A673 (cell line): ENCODE measurements at regions of chr10 and their contacts with region 1.

Region 1: DNA sequence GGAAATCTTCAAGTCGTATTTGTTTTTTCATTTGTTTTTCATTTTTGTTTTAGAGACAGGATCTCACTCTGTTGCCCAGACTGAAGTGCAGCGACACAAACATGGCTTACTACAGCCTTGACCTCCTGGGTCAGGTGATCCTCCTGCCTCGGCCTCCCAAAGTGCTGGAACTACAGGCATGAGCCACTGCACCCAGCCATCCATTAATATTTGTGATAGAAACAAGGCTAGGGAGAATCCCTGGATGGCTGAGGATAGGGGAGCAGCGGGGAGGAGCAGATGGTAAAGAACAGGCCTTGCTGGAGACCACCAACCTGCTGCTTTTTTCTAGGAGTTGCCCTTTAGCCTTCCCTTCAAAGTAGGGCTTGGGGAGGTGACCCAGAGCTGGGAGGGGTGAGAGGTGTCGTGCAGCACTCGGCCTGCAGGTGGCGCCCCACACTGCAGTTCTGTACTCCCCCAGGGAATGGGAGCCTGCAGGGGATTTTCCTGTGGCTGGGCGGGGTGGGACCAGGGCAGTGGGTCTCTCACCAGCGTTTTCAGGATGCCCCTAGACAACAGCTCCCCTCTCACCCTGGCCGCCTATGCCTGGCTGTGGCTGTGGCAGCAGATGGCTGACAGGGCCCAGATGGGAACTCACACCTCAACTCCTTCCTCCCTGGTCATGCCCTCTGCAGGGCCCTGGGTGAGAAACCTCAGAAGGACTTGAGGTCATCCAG is 12.6 kb upstream of the CDH23 start:
- DNase-seq: peak; percentile 75
- H3K4me3 ChIP-seq: no peak overlapping the region
- H3K27ac ChIP-seq: no peak overlapping the region
- H3K4me1 ChIP-seq: no peaks in the 10 kb centered on the region
- H3K27me3 ChIP-seq: no peaks in the 10 kb centered on the region
- CTCF ChIP-seq: peak; percentile 98

Region 2: DNA sequence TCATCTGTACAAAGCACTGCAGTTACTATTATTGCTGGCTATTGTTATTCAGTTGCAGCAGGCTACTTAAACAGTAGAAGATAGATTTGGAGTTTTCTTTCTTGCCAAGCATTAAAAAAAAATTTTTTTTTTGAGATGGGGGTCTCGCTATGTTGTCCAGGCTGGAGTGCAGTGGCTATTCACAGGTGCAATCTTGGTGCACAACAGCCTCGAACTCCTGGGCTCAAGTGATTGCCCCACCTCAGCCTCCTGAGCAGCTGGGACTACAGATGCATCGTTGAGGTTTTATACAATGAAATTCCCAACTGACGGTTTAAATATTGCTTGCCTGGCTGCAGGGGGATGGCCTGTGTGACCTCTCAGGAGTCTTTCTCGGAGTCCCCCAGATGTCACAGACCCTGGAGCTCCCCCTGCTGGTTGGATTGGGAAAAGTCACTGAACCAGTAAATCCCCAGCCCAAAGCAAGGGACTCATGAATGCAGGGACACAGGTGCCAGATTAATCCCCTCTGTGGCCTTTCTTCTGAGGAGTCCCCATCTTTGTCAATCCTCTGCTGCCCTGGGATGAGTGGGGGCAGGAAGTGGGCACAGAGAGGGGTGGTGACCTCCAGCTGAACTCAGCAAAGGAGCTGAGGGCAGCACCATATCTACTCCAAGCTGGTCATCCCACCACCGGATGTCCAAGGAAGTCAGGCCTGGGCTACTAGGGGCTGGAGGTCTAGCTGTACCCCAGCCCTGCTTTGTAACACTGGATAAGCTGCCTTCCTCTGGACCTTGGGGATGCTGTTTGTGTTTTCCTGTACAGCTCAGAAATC is 185.9 kb after region 1 on chr10:
- CTCF ChIA-PET with region 1: interaction called, 5 read pairs
- POLR2A ChIA-PET with region 1: no interaction called
- intact Hi-C with region 1: loop called (anchors 1 kb)
- DNase-seq: peak; percentile 73
- H3K4me3 ChIP-seq: no peak overlapping the region
- H3K27ac ChIP-seq: no peak overlapping the region
- H3K4me1 ChIP-seq: peaks cover 1% of the 10 kb centered on the region
- H3K27me3 ChIP-seq: no peaks in the 10 kb centered on the region
- CTCF ChIP-seq: peak; percentile 84

Region 3: DNA sequence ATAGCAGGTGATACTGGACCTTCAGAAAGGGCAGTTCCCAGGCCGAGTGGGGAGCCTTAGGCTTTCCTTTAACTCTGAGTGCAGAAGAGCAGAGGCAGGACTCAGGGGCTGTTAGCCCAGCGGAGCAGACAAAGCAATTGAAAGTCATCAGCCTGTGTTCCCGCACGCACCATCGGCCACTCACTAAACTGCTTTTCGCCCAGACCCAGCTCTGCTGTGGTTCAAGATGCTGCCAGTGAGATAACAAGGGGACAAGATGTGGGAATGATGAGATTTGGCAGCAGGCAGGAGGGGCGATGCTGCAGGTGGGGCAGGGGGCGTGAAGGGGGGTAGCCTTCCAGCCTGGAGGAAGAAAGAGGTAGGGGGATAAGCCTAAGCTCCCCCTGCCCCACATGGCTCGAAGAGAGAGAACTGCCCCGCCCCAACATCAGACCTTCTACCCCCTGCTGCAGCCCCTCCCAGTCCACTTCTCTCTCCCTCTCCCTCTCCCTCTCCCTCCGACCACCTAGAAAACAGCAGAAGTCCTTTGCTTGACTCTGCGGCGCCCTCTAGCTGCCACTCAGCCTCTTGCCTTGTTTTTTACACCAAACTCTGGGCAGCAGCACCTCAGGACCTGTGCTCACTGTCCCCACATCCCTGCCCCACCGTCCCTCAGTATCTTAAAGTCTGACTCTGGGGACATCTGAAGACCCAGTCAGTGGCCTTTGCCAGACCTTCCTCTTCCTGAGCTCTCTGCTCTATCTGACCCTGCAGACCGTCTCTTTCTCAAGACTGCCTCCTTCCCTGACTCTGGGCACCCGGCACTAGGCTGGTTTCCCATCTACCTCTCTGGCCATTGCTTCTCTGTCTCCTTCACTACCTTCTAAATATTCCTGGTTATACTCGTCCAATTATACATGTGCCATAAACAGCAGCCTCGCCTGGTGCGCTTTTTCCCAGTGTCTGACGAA is 225.0 kb after region 1 on chr10:
- CTCF ChIA-PET with region 1: no interaction called
- POLR2A ChIA-PET with region 1: no interaction called
- intact Hi-C with region 1: loop called (anchors 1 kb)
- DNase-seq: peak; percentile 78
- H3K4me3 ChIP-seq: no peak overlapping the region
- H3K27ac ChIP-seq: no peak overlapping the region
- H3K4me1 ChIP-seq: peaks cover 9% of the 10 kb centered on the region
- H3K27me3 ChIP-seq: no peaks in the 10 kb centered on the region
- CTCF ChIP-seq: peak; percentile 91

Region 4: GRCh38 chr10:71708301-71708703 is 324.2 kb after region 1 on chr10:
- CTCF ChIA-PET with region 1: no interaction called
- POLR2A ChIA-PET with region 1: no interaction called
- intact Hi-C with region 1: loop called (anchors 5 kb)
- DNase-seq: peak; percentile 58
- H3K4me3 ChIP-seq: no peak overlapping the region
- H3K27ac ChIP-seq: no peak overlapping the region
- H3K4me1 ChIP-seq: peaks cover under 1% of the 10 kb centered on the region
- H3K27me3 ChIP-seq: no peaks in the 10 kb centered on the region
- CTCF ChIP-seq: peak; percentile 88